ENCODE measurements at regions of chr13 and their contacts with region 1.

Region 1: GRCh38 chr13:41384755-41385503 is 72.4 kb upstream of the RGCC start:
- DNase-seq: peak in 3 of 14 experiments; percentile 17 to 25 (median 23)
- ATAC-seq: no peak
- H3K4me3 ChIP-seq: no peak overlapping the region
- H3K4me3 Mint-ChIP-seq: no peak overlapping the region
- H3K27ac ChIP-seq: no peak overlapping the region
- H3K27ac Mint-ChIP-seq: no peak overlapping the region
- H3K4me1 ChIP-seq: peaks cover 5% of the 10 kb centered on the region
- H3K4me1 Mint-ChIP-seq: peaks cover 51% of the 10 kb centered on the region
- H3K27me3 ChIP-seq: no peaks in the 10 kb centered on the region
- H3K27me3 Mint-ChIP-seq: no peaks in the 10 kb centered on the region
- CTCF ChIP-seq: peak; percentile 45

Region 2: GRCh38 chr13:41352935-41353840 is 31.7 kb before region 1 on chr13:
- CTCF ChIA-PET with region 1: interaction called, 7 read pairs
- POLR2A ChIA-PET with region 1: interaction called, 14 read pairs
- intact Hi-C with region 1: loop called in 1 of 2 experiments (anchors 5 kb)
- DNase-seq: peak; percentile 15 to 85 (median 46)
- ATAC-seq: peak; percentile 51
- H3K4me3 ChIP-seq: no peak overlapping the region
- H3K4me3 Mint-ChIP-seq: peak overlapping the region; percentile 44
- H3K27ac ChIP-seq: peak overlapping the region; percentile 25 to 56
- H3K27ac Mint-ChIP-seq: peak overlapping the region; percentile 72
- H3K4me1 ChIP-seq: peaks cover 34% of the 10 kb centered on the region
- H3K4me1 Mint-ChIP-seq: peaks cover 57% of the 10 kb centered on the region
- H3K27me3 ChIP-seq: no peaks in the 10 kb centered on the region
- H3K27me3 Mint-ChIP-seq: no peaks in the 10 kb centered on the region
- CTCF ChIP-seq: peak; percentile 76

Region 3: GRCh38 chr13:41470196-41470595 is 85.3 kb after region 1 on chr13:
- CTCF ChIA-PET with region 1: no interaction called
- POLR2A ChIA-PET with region 1: no interaction called
- intact Hi-C with region 1: no loop called
- DNase-seq: peak in 4 of 14 experiments; percentile 37 to 52 (median 44)
- ATAC-seq: peak; percentile 19
- H3K4me3 ChIP-seq: no peak overlapping the region
- H3K4me3 Mint-ChIP-seq: peak overlapping the region; percentile 44
- H3K27ac ChIP-seq: peak overlapping the region in 1 of 2 donors; percentile 20
- H3K27ac Mint-ChIP-seq: peak overlapping the region; percentile 87
- H3K4me1 ChIP-seq: peaks cover 40% of the 10 kb centered on the region
- H3K4me1 Mint-ChIP-seq: peaks cover 88% of the 10 kb centered on the region
- H3K27me3 ChIP-seq: no peaks in the 10 kb centered on the region
- H3K27me3 Mint-ChIP-seq: no peaks in the 10 kb centered on the region
- CTCF ChIP-seq: no peak